Natural killer cell (primary cell): ENCODE measurements at regions of chr19 and their contacts with region 1.

Region 1: DNA sequence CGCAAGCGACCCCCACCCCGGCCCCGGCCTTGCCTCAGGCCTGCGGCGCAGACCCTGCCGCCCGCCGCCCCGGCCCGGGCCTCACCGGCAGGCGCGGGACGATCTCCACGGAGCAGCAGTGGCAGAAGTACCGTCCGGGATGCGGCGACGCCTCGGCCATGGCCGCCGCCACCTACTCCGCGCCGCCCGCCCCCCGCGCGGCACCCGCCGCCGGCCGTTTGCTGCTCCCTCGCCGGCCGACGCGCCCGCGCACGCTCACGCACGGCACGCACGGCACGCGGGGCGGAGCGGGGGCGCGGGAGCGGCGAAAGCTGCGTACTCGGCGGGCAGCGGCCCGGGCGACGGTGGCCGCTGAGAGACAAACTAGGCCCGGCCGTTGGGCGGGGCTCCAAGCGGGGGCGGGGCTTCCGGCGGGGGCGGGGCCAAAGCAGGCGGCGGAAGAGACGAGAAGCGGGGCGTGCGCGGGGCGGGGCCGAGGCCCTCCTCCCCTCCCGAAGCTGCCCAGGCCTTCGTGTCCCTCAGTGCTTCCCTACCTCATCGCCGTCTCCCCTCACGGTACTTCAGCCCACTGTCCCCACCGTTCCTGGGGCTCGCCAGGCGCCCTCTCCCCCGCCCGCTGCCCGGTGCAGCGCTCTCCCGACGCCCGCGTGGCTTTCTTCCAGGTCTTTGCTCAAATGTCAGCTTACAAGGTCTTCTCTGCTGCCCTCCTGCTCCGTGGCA is at the start of gene RNF126:
- DNase-seq: peak; percentile 85 to 94
- ATAC-seq: peak; percentile 52 to 77 (median 55)
- H3K4me3 ChIP-seq: peak within 1 kb of the TSS; percentile 96
- H3K4me3 Mint-ChIP-seq: peak within 1 kb of the TSS; percentile 96
- H3K27ac ChIP-seq: peak within 1 kb of the TSS; percentile 99
- H3K27ac Mint-ChIP-seq: peak within 1 kb of the TSS; percentile 98
- H3K4me1 ChIP-seq: peaks cover 63% of the 10 kb centered on the region
- H3K4me1 Mint-ChIP-seq: peaks cover 45 to 57% of the 10 kb centered on the region in 2 donors
- H3K27me3 ChIP-seq: no peaks in the 10 kb centered on the region
- H3K27me3 Mint-ChIP-seq: no peaks in the 10 kb centered on the region
- CTCF ChIP-seq: no peak
- total RNA-seq, gene RNF126: 119 to 149 (median 146) TPM

Region 2: GRCh38 chr19:506404-507285 is 156.5 kb before region 1 on chr19:
- intact Hi-C with region 1: loop called (anchors 5 kb)
- DNase-seq: peak; percentile 91 to 99
- ATAC-seq: peak; percentile 52 to 79 (median 62)
- H3K4me3 ChIP-seq: peak overlapping the region; percentile 68
- H3K4me3 Mint-ChIP-seq: peak overlapping the region; percentile 96
- H3K27ac ChIP-seq: peak overlapping the region; percentile 97
- H3K27ac Mint-ChIP-seq: peak overlapping the region; percentile 96 to 98
- H3K4me1 ChIP-seq: peaks cover 47% of the 10 kb centered on the region
- H3K4me1 Mint-ChIP-seq: peaks cover 20 to 44% of the 10 kb centered on the region in 2 donors
- H3K27me3 ChIP-seq: no peaks in the 10 kb centered on the region
- H3K27me3 Mint-ChIP-seq: no peaks in the 10 kb centered on the region
- CTCF ChIP-seq: peak; percentile 93

Region 3: DNA sequence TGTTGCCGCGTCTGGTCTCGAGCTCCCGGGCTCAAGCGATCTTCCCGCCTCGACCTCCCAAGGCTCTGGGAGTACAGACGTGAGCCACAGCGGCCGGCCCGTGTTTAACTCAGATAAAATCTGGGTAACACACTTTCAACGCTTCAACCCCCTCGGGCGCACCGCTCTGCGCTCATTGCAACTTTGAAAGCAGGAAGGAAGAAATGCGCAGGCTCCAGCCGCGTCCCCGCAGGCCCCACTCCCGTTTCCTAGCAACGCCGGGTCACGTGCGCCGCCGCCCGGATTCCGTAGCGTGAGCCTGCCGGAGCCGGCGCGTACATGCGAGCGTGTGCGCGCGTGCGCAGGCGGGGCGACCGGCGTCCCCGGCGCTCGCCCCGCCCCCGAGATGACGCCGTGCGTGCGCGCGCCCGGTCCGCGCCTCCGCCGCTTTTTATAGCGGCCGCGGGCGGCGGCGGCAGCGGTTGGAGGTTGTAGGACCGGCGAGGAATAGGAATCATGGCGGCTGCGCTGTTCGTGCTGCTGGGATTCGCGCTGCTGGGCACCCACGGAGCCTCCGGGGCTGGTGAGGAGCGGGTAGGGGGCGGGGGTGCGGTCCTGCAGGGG is 90.9 kb before region 1 on chr19 and contains the start of gene BSG:
- intact Hi-C with region 1: loop called (anchors 5 kb)
- DNase-seq: peak; percentile 99 to 100
- ATAC-seq: peak; percentile 77 to 92 (median 87)
- H3K4me3 ChIP-seq: peak within 1 kb of the TSS; percentile 84
- H3K4me3 Mint-ChIP-seq: peak within 1 kb of the TSS; percentile 97
- H3K27ac ChIP-seq: peak within 1 kb of the TSS; percentile 93
- H3K27ac Mint-ChIP-seq: peak within 1 kb of the TSS; percentile 88 to 92
- H3K4me1 ChIP-seq: peaks cover 52% of the 10 kb centered on the region
- H3K4me1 Mint-ChIP-seq: peaks cover 31 to 54% of the 10 kb centered on the region in 2 donors
- H3K27me3 ChIP-seq: no peaks in the 10 kb centered on the region
- H3K27me3 Mint-ChIP-seq: no peaks in the 10 kb centered on the region
- CTCF ChIP-seq: no peak
- total RNA-seq, gene BSG: 229 to 248 (median 236) TPM

Region 4: GRCh38 chr19:703651-704446 is 40.7 kb after region 1 on chr19:
- intact Hi-C with region 1: loop called (anchors 5 kb)
- DNase-seq: peak; percentile 73 to 76
- ATAC-seq: peak; percentile 83 to 92 (median 89)
- H3K4me3 ChIP-seq: no peak overlapping the region
- H3K4me3 Mint-ChIP-seq: no peak overlapping the region
- H3K27ac ChIP-seq: no peak overlapping the region
- H3K27ac Mint-ChIP-seq: peak overlapping the region; percentile 5 to 8
- H3K4me1 ChIP-seq: peaks cover 21% of the 10 kb centered on the region
- H3K4me1 Mint-ChIP-seq: peaks cover 9 to 10% of the 10 kb centered on the region in 2 donors
- H3K27me3 ChIP-seq: peaks cover 7% of the 10 kb centered on the region
- H3K27me3 Mint-ChIP-seq: peaks cover 6 to 7% of the 10 kb centered on the region in 2 donors
- CTCF ChIP-seq: no peak

Region 5: DNA sequence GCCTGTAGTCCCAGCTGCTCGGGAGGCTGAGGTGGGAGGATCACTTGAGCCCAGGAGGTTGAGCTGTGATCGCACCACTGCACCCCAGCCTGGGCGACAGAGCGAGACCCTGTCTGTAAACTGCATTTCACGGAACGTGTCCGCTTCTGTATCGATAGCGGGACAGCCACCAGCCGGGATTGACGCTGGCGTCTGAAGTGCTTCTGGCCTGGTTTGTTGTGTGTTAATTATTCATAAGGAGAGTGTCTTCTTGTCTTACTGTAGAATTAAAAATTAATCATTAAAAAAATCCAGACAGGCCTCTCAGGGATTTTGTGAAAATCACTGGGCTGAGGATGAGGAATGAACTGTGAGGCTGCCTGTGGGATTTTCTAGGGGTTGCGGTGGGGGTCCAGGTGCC is 71.6 kb after region 1 on chr19:
- intact Hi-C with region 1: loop called (anchors 1 kb)
- DNase-seq: no peak
- ATAC-seq: no peak
- H3K4me3 ChIP-seq: no peak overlapping the region
- H3K4me3 Mint-ChIP-seq: no peak overlapping the region
- H3K27ac ChIP-seq: no peak overlapping the region
- H3K27ac Mint-ChIP-seq: no peak overlapping the region
- H3K4me1 ChIP-seq: peaks cover 26% of the 10 kb centered on the region
- H3K4me1 Mint-ChIP-seq: peaks cover 0 to 26% of the 10 kb centered on the region in 2 donors
- H3K27me3 ChIP-seq: no peaks in the 10 kb centered on the region
- H3K27me3 Mint-ChIP-seq: no peaks in the 10 kb centered on the region
- CTCF ChIP-seq: no peak

Region 6: GRCh38 chr19:796692-797527 is 133.8 kb after region 1 on chr19 and contains the start of gene PTBP1:
- intact Hi-C with region 1: loop called (anchors 5 kb)
- DNase-seq: peak; percentile 98 to 100
- ATAC-seq: peak; percentile 82 to 94 (median 84)
- H3K4me3 ChIP-seq: peak within 1 kb of the TSS; percentile 72
- H3K4me3 Mint-ChIP-seq: peak within 1 kb of the TSS; percentile 95
- H3K27ac ChIP-seq: peak within 1 kb of the TSS; percentile 65
- H3K27ac Mint-ChIP-seq: peak within 1 kb of the TSS; percentile 87 to 88
- H3K4me1 ChIP-seq: peaks cover 46% of the 10 kb centered on the region
- H3K4me1 Mint-ChIP-seq: peaks cover 42% of the 10 kb centered on the region in 2 donors
- H3K27me3 ChIP-seq: no peaks in the 10 kb centered on the region
- H3K27me3 Mint-ChIP-seq: no peaks in the 10 kb centered on the region
- CTCF ChIP-seq: no peak
- total RNA-seq, gene PTBP1: 302 to 350 (median 345) TPM

Region 7: DNA sequence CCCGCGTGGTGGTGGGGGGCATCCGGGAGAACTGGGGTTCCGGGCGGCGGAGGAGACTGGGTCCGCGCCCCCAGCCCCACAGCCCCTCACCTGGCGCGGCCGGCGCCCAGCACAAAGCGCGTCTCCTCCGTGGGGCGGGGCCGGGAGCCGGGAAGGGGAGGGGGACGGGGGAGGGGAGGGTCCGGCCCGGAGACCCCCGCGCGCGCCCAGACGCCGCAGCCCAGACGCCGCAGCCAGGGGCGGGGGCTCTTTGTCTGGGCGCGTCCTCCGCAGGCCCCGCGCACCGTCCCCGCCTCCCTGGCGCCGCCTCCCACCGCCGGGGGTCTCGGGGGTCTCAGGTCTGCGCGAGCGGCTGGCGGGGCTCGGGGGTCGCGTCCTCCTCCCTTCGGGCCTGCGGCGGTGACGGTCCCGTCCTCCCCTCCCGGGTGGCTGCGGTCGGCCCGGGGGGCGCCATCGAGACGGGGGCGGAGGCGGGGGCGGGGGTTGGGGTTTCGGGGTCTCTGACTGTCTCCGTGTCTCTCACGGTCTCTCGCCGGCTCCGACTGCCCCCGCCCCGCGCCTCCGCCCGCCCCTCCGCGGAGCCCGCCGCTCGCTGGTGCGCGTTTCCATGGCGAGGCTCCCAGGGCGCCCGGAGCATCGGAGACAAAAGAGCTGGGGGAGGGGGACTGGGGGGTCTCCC is 158.8 kb after region 1 on chr19 and contains the start of gene PLPPR3:
- intact Hi-C with region 1: no loop called
- DNase-seq: no peak
- ATAC-seq: no peak
- H3K4me3 ChIP-seq: no peak within 1 kb of the TSS
- H3K4me3 Mint-ChIP-seq: peak within 1 kb of the TSS; percentile 28
- H3K27ac ChIP-seq: no peak within 1 kb of the TSS
- H3K27ac Mint-ChIP-seq: no peak within 1 kb of the TSS
- H3K4me1 ChIP-seq: no peaks in the 10 kb centered on the region
- H3K4me1 Mint-ChIP-seq: peaks cover 0 to 2% of the 10 kb centered on the region in 2 donors
- H3K27me3 ChIP-seq: peaks cover 11% of the 10 kb centered on the region
- H3K27me3 Mint-ChIP-seq: peaks cover 6 to 10% of the 10 kb centered on the region in 2 donors
- CTCF ChIP-seq: no peak
- total RNA-seq, gene PLPPR3: not detected